ENCODE measurements at regions of chr3 and their contacts with region 1.

Region 1: GRCh38 chr3:126259411-126260391 is 79.3 kb upstream of the ALDH1L1 start:
- DNase-seq: peak; percentile 31
- H3K4me3 ChIP-seq: no peak overlapping the region
- H3K27ac ChIP-seq: no peak overlapping the region
- H3K4me1 ChIP-seq: no peaks in the 10 kb centered on the region
- H3K27me3 ChIP-seq: no peaks in the 10 kb centered on the region
- CTCF ChIP-seq: peak; percentile 47

Region 2: GRCh38 chr3:126389112-126389793 is 129.6 kb after region 1 on chr3:
- intact Hi-C with region 1: loop called (anchors 2 kb)
- DNase-seq: peak; percentile 87
- H3K4me3 ChIP-seq: peak overlapping the region; percentile 29
- H3K27ac ChIP-seq: no peak overlapping the region
- H3K4me1 ChIP-seq: no peaks in the 10 kb centered on the region
- H3K27me3 ChIP-seq: no peaks in the 10 kb centered on the region
- CTCF ChIP-seq: peak; percentile 90

Measured in colonic mucosa (tissue), 4 donors.